ENCODE measurements at regions of chr5 and their contacts with region 1.

Region 1: DNA sequence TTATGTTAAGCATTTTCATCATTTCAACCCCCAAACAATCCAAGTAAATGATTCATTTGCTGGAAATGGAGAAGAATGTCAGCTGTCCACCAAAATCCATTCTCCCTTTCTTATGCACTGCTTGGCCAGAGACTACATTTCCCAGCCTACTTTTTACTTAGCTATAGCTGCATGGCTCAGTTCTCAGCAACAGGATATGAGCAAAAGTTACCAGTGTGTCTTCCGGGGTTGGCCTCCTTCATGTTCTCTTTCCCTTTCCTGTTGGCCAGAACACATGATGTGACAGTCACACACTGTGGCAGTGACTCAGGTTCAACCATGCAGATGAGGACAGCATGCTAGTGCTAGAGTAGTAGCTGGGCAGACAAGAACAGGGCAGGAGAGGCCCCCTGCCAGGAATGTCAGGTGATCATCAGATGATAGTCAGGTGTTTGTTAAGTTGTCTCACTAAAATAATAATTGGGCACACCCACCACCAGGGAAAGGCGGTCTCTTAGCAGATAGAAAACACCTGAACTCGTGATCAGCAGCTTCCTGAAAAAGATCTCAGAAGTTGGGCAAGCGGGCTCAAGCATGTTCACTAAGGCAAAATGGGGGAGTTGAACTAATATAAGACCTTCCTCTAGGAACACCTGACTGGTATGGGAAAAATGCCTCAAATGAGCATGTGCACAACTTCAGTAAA is 12.2 kb downstream of the GPR150 start:
- DNase-seq: peak; percentile 27 to 81 (median 64)
- ATAC-seq: peak; percentile 97
- H3K4me3 ChIP-seq: no peak overlapping the region
- H3K4me3 Mint-ChIP-seq: no peak overlapping the region
- H3K27ac ChIP-seq: peak overlapping the region; percentile 39 to 44
- H3K27ac Mint-ChIP-seq: peak overlapping the region; percentile 95
- H3K4me1 ChIP-seq: peaks cover 14% of the 10 kb centered on the region
- H3K4me1 Mint-ChIP-seq: peaks cover 15% of the 10 kb centered on the region
- H3K27me3 ChIP-seq: peaks cover 0 to 3% of the 10 kb centered on the region in 2 experiments
- H3K27me3 Mint-ChIP-seq: no peaks in the 10 kb centered on the region
- CTCF ChIP-seq: no peak

Region 2: DNA sequence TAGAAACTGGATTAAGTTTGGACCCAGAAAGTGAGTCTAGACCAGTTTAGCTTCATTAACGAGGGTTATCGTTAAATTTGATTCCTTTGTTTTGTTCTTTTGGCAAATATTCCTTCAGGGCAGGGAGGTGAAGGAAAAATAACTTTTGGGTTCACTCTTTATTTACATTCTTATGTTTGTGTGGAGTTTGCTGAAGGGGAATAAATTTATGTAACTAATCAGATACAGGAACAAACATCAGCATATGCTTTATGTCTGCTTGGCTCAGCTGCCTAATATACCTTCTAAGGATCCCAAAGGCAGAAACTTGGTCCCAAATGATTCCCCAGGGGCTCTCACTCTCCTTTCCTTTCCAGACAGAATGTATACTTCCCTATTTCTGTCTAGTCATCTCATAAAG is 479.6 kb before region 1 on chr5:
- CTCF ChIA-PET with region 1: no interaction called
- POLR2A ChIA-PET with region 1: no interaction called
- intact Hi-C with region 1: no loop called
- DNase-seq: no peak
- ATAC-seq: no peak
- H3K4me3 ChIP-seq: no peak overlapping the region
- H3K4me3 Mint-ChIP-seq: no peak overlapping the region
- H3K27ac ChIP-seq: no peak overlapping the region
- H3K27ac Mint-ChIP-seq: no peak overlapping the region
- H3K4me1 ChIP-seq: no peaks in the 10 kb centered on the region
- H3K4me1 Mint-ChIP-seq: no peaks in the 10 kb centered on the region
- H3K27me3 ChIP-seq: no peaks in the 10 kb centered on the region
- H3K27me3 Mint-ChIP-seq: no peaks in the 10 kb centered on the region
- CTCF ChIP-seq: no peak

Region 3: GRCh38 chr5:95620030-95620869 is 11.9 kb before region 1 on chr5 and contains the start of gene GPR150:
- CTCF ChIA-PET with region 1: interaction called, 5 read pairs
- POLR2A ChIA-PET with region 1: interaction called, 27 read pairs
- intact Hi-C with region 1: loop called in 1 of 2 experiments (anchors 1 kb)
- DNase-seq: peak; percentile 32 to 80 (median 61)
- ATAC-seq: peak; percentile 69
- H3K4me3 ChIP-seq: peak within 1 kb of the TSS; percentile 65 to 74
- H3K4me3 Mint-ChIP-seq: peak within 1 kb of the TSS; percentile 89
- H3K27ac ChIP-seq: peak within 1 kb of the TSS in 1 of 2 experiments; percentile 22
- H3K27ac Mint-ChIP-seq: peak within 1 kb of the TSS; percentile 72
- H3K4me1 ChIP-seq: peaks cover 39% of the 10 kb centered on the region
- H3K4me1 Mint-ChIP-seq: peaks cover 46% of the 10 kb centered on the region
- H3K27me3 ChIP-seq: no peaks in the 10 kb centered on the region
- H3K27me3 Mint-ChIP-seq: no peaks in the 10 kb centered on the region
- CTCF ChIP-seq: no peak
- total RNA-seq, gene GPR150: 0.35 TPM in 1 of 2 experiments, not detected in the other

Region 4: GRCh38 chr5:95808686-95809413 is 176.7 kb after region 1 on chr5:
- CTCF ChIA-PET with region 1: no interaction called
- POLR2A ChIA-PET with region 1: no interaction called
- intact Hi-C with region 1: no loop called
- DNase-seq: peak; percentile 54 to 95 (median 79)
- ATAC-seq: peak; percentile 99
- H3K4me3 ChIP-seq: peak overlapping the region in 1 of 2 experiments; percentile 9
- H3K4me3 Mint-ChIP-seq: peak overlapping the region; percentile 70
- H3K27ac ChIP-seq: peak overlapping the region; percentile 5 to 61
- H3K27ac Mint-ChIP-seq: peak overlapping the region; percentile 80
- H3K4me1 ChIP-seq: peaks cover 60% of the 10 kb centered on the region
- H3K4me1 Mint-ChIP-seq: peaks cover 58% of the 10 kb centered on the region
- H3K27me3 ChIP-seq: no peaks in the 10 kb centered on the region
- H3K27me3 Mint-ChIP-seq: no peaks in the 10 kb centered on the region
- CTCF ChIP-seq: no peak

Measured in CD8-positive, alpha-beta T cell (primary cell).